Activated CD4-positive, alpha-beta memory T cell treated with anti-CD3 and anti-CD28 coated beads, Interleukin-2, amount 10 ng/mL, durations not matched to agents 7 days and 5 days (primary cell): ENCODE measurements at regions of chr2 and their contacts with region 1.

Region 1: GRCh38 chr2:170361090-170361936 is 183.4 kb downstream of the MYO3B start:
- DNase-seq: peak; percentile 67
- H3K4me3 Mint-ChIP-seq: peak overlapping the region; percentile 17
- H3K27ac Mint-ChIP-seq: peak overlapping the region; percentile 18
- H3K4me1 Mint-ChIP-seq: peaks cover 30% of the 10 kb centered on the region
- H3K27me3 Mint-ChIP-seq: peaks cover 5% of the 10 kb centered on the region

Region 2: GRCh38 chr2:170324640-170325046 is 36.7 kb before region 1 on chr2:
- CTCF ChIA-PET with region 1: interaction called, 32 read pairs
- POLR2A ChIA-PET with region 1: no interaction called
- DNase-seq: peak; percentile 37
- H3K4me3 Mint-ChIP-seq: no peak overlapping the region
- H3K27ac Mint-ChIP-seq: no peak overlapping the region
- H3K4me1 Mint-ChIP-seq: no peaks in the 10 kb centered on the region
- H3K27me3 Mint-ChIP-seq: peaks cover 7% of the 10 kb centered on the region

Region 3: DNA sequence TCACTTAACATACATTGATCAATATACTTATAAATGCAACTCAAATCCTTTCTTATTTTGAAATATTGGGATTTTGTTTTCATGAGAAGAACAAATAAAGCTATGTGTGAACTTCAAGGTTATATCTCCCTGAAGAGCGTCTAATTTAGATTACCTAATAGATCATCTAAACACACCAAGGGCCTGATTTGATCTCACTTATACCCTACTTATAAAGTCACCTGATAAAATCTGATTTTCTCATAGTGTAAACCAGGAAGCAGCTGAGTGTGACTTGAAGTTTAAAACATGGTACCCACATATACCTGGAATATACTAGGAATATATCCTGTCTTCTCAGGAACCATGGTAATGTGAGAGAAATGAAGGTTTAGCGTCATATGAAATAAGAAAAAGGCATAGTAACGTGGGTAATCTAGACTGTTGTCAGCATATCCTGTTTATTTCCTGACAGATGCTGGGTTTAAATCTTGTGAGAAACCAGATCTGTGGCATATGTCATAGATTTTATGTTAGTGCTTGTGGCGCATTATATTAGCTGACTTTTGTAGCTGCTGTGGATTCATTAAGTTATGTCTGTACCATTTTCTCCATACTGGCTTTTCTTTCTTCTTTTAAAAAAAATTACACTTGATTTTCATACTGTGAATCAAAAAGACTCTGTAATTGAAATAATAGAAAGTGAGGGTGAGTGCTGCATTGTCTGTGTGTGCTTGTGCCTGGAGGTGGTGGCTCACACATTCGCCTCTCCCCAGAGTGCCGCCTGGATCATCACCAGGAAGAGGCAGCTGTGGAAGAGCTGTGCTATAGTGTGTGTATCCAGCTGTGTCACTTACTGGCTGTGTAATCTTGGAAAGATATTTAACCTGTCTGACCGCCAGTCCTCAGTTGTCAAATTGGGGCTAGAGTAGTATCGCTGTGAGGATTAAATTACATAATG is 19.4 kb before region 1 on chr2:
- CTCF ChIA-PET with region 1: interaction called, 26 read pairs
- POLR2A ChIA-PET with region 1: no interaction called
- DNase-seq: no peak
- H3K4me3 Mint-ChIP-seq: no peak overlapping the region
- H3K27ac Mint-ChIP-seq: no peak overlapping the region
- H3K4me1 Mint-ChIP-seq: peaks cover 11% of the 10 kb centered on the region
- H3K27me3 Mint-ChIP-seq: peaks cover 5% of the 10 kb centered on the region

Region 4: DNA sequence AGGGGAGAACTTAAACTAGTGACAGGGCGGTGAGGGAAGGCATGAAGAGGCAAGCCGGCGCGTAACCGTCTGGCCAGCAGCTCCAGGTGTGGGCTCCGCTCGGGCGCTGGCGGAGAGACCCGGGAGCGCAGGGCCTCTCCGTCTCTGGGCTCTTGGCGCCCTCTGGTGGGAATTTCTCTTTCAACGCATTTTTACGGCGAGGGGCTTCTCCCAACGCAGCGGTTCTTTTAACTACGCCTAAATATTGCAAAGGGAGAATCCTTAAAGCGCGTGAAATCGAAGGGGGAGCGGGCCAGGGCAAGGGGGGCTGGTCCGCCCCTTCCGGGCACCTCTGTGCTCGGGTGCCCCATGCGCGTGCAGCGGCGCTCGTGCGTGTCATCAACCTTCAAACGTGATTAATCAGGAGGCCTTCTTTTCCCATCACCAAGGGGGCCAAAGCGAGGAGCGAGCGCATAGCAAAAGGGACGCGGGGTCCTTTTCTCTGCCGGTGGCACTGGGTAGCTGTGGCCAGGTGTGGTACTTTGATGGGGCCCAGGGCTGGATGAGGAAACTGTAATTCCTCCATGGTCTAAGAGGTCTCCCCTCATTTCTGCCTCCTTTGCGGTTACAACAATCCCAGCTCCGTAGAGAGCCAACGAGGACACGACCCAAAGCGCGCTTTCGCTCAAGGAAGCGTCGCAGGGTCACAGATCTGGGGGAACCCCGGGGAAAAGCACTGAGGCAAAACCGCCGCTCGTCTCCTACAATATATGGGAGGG is 454.6 kb after region 1 on chr2:
- CTCF ChIA-PET with region 1: interaction called, 16 read pairs
- POLR2A ChIA-PET with region 1: no interaction called
- DNase-seq: peak; percentile 65
- H3K4me3 Mint-ChIP-seq: peak overlapping the region; percentile 65
- H3K27ac Mint-ChIP-seq: peak overlapping the region; percentile 22
- H3K4me1 Mint-ChIP-seq: peaks cover 48% of the 10 kb centered on the region
- H3K27me3 Mint-ChIP-seq: peaks cover 85% of the 10 kb centered on the region